ENCODE measurements at regions of chr1 and their contacts with region 1.

Region 1: GRCh38 chr1:145858894-145859490 is at the start of gene PIAS3:
- DNase-seq: peak; percentile 97
- ATAC-seq: peak; percentile 94 to 98 (median 96)
- H3K4me3 ChIP-seq: peak within 1 kb of the TSS; percentile 61 to 89 (median 83)
- H3K27ac ChIP-seq: peak within 1 kb of the TSS; percentile 82 to 91 (median 89)
- H3K4me1 ChIP-seq: peaks cover 8 to 22% (median 17%) of the 10 kb centered on the region in 9 donors
- H3K27me3 ChIP-seq: no peaks in the 10 kb centered on the region
- CTCF ChIP-seq: no peak
- total RNA-seq, gene PIAS3: 12.6 to 21.0 (median 15.0) TPM

Region 2: GRCh38 chr1:145823565-145824498 is 35.2 kb before region 1 on chr1 and contains the starts of genes POLR3C and RNF115:
- intact Hi-C with region 1: loop called in 1 of 10 experiments (anchors 2 kb)
- DNase-seq: peak; percentile 90 to 93
- ATAC-seq: peak; percentile 96 to 98 (median 96)
- H3K4me3 ChIP-seq: peak within 1 kb of the TSS; percentile 68 to 88 (median 76)
- H3K27ac ChIP-seq: peak within 1 kb of the TSS; percentile 91 to 97 (median 94)
- H3K4me1 ChIP-seq: peaks cover 7 to 23% (median 16%) of the 10 kb centered on the region in 9 donors
- H3K27me3 ChIP-seq: no peaks in the 10 kb centered on the region
- CTCF ChIP-seq: no peak
- total RNA-seq, gene POLR3C: 11.8 to 18.1 (median 16.1) TPM
- total RNA-seq, gene RNF115: 39.2 to 99.0 (median 56.3) TPM

Region 3: DNA sequence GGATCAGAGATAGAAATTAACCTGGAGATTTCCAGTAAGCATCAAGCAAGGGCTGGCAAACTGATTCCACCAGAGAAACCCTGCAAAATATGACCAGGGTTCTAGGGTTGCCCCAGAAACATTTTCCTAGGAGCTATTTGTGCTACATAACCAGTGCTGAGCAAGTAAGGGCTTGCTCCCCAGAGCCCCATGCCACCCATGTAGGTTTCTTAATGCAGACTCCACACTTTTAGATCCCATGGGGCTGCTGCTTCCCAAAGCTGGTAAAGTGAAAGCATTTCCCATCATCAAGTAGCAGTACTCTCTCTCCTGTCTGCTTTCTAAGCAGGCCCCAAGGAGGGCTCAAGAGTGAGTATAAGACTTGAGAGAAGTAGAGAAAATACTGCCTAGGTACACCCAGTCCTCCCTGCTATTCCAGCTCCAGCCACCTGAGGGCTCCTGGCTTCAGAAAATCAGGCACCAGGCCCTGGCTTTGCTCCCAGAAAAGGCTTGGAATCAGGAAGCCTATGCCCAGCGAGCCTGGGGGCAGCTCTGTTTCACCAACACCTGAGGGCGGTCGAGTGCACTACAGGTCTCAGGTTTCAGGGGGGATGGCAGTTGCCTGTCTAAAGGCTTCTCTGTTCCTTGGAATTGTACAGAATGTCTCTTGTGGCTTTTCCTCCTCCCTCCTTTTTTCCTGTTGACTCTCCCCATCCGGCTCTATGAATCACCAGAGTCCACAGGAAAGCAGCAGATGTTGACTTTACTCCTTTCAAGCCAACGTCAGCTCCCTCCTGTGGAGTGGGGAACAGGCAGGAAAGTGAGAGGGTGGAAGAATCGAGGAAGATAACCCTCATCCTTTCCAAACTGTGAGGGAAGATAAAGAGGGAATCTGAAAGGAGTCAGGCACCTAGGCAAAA is 32.8 kb after region 1 on chr1:
- intact Hi-C with region 1: loop called in 3 of 10 experiments (anchors 1 to 5 kb)
- DNase-seq: peak; percentile 87 to 95
- ATAC-seq: peak; percentile 86 to 95 (median 92)
- H3K4me3 ChIP-seq: peak overlapping the region in 7 of 10 donors; percentile 2 to 28 (median 17)
- H3K27ac ChIP-seq: peak overlapping the region; percentile 67 to 93 (median 82)
- H3K4me1 ChIP-seq: peaks cover 15 to 47% (median 30%) of the 10 kb centered on the region in 9 donors
- H3K27me3 ChIP-seq: no peaks in the 10 kb centered on the region
- CTCF ChIP-seq: peak; percentile 91 to 97 (median 94)

Region 4: DNA sequence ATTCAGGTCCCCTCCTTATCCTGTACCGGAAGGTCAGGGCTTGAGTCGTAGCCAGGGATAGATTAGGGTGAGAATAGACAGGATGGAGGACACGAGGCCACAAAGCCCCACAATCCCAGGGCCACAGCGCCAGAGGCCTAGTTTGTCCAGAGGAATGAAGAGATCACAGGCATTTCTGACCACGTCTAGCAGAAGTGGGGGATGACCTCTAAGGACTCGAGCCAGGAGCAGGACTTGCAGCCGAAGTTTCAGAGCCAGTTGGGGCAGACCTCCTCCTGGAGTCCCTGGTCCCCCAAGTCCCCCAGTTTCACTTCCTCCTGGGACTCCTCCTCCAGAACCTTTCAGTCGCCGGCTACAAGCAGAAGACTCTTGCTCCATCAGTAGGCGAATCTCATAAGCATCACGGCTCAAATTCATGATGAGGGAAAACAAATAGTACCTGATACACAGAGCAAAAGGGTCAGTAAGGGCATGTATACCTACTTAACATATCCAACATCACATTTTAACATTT is 53.2 kb after region 1 on chr1:
- intact Hi-C with region 1: loop called in 3 of 10 experiments (anchors 5 kb)
- DNase-seq: no peak
- ATAC-seq: no peak
- H3K4me3 ChIP-seq: no peak overlapping the region
- H3K27ac ChIP-seq: no peak overlapping the region
- H3K4me1 ChIP-seq: peaks cover 0 to 40% (median 29%) of the 10 kb centered on the region in 9 donors
- H3K27me3 ChIP-seq: no peaks in the 10 kb centered on the region
- CTCF ChIP-seq: no peak

Region 5: DNA sequence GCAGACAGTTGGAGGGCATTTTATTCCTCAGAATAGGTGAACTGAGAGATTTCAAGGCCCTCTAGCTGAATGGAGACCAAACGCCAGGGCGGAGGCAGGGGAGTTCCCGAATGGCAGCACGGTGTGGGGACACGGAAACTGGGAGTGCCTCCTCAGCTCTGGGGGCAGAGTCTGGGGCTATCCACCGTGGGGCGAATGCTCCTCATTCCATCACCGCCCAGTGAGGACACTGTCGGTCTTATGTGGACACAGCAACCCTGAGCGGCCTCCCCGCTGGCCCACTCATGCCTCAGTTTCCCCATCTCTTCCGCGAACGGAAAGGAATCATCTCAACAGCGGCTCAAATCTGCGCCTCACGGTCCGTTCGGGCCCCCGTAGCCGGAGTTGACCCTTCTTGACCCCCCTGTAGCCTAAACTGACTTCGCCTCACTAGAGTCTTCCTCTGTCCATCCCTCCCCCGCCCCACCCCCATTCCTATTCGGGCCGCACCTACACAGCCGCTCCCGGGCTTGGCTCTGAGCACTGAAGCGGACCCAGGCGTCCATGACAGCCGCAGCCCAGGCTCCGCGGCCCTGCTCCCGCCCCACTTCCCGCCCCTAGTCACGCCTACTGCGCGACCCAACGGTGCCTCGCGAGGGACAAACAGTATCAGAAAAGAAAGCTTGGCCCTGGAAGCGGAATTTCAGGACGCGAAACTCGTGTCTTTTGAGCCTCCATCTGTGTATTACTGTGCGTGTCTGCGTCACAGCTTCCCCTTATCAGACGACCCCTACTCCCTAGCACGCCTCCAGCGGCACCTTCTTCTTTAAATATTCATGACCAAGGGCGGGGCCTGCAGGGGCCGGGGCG is 59.4 kb after region 1 on chr1 and contains the start of gene PEX11B:
- intact Hi-C with region 1: loop called in 3 of 10 experiments (anchors 5 kb)
- DNase-seq: peak; percentile 88 to 91
- ATAC-seq: peak; percentile 94 to 98 (median 96)
- H3K4me3 ChIP-seq: peak within 1 kb of the TSS; percentile 73 to 99 (median 90)
- H3K27ac ChIP-seq: peak within 1 kb of the TSS; percentile 79 to 95 (median 90)
- H3K4me1 ChIP-seq: peaks cover 3 to 34% (median 26%) of the 10 kb centered on the region in 9 donors
- H3K27me3 ChIP-seq: no peaks in the 10 kb centered on the region
- CTCF ChIP-seq: peak in 1 of 9 donors; percentile 15
- total RNA-seq, gene PEX11B: 20.4 to 26.3 (median 23.0) TPM

Region 6: GRCh38 chr1:145972580-145972979 is 113.6 kb after region 1 on chr1:
- intact Hi-C with region 1: loop called in 1 of 10 experiments (anchors 5 kb)
- DNase-seq: no peak
- ATAC-seq: no peak
- H3K4me3 ChIP-seq: no peak overlapping the region
- H3K27ac ChIP-seq: no peak overlapping the region
- H3K4me1 ChIP-seq: peaks cover 0 to 6% (median 5%) of the 10 kb centered on the region in 9 donors
- H3K27me3 ChIP-seq: no peaks in the 10 kb centered on the region
- CTCF ChIP-seq: no peak

Measured in heart right ventricle (tissue), 16 donors.